HepG2 (cell line): ENCODE measurements at regions of chr6 and their contacts with region 1.

Region 1: GRCh38 chr6:119484637-119484997 is 135.1 kb upstream of the MAN1A1 start:
- DNase-seq: no peak
- ATAC-seq: no peak
- H3K4me3 ChIP-seq: no peak overlapping the region
- H3K27ac ChIP-seq: no peak overlapping the region
- H3K4me1 ChIP-seq: no peaks in the 10 kb centered on the region
- H3K27me3 ChIP-seq: peaks cover 0 to 19% of the 10 kb centered on the region in 2 experiments; a peak in 2 of 5 replicates
- CTCF ChIP-seq: no peak
- EP300 ChIP-seq: no peak
- POLR2A ChIP-seq: no peak
- RAD21 ChIP-seq: no peak

Region 2: DNA sequence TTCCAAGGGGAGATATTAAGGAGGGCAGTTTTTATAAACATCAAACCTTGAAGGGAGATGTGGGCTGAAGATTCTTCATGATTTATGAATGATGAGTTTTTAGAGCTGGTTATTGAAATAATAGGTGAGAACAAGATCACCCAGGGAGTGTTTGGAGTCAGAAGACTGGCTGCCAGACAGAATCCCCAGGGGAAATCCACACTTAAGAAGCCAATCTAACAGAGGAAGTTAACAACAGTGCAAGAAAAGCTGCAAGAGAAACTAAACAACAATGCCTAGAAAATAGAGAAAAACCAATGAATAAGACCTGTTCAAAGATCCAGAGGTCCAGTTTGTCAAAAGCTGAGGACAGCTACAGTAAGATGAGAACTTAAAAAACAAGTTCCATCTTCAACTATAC is 32.8 kb after region 1 on chr6:
- CTCF ChIA-PET with region 1: no interaction called
- POLR2A ChIA-PET with region 1: no interaction called
- in situ Hi-C with region 1: no loop called
- intact Hi-C with region 1: loop called (anchors 1 kb)
- DNase-seq: no peak
- ATAC-seq: no peak
- H3K4me3 ChIP-seq: no peak overlapping the region
- H3K27ac ChIP-seq: no peak overlapping the region
- H3K4me1 ChIP-seq: no peaks in the 10 kb centered on the region
- H3K27me3 ChIP-seq: no peaks in the 10 kb centered on the region; a peak in 2 of 5 replicates
- CTCF ChIP-seq: no peak
- EP300 ChIP-seq: no peak
- POLR2A ChIP-seq: no peak
- RAD21 ChIP-seq: no peak

Region 3: GRCh38 chr6:119686644-119687043 is 202.0 kb after region 1 on chr6:
- CTCF ChIA-PET with region 1: no interaction called
- POLR2A ChIA-PET with region 1: no interaction called
- in situ Hi-C with region 1: no loop called
- intact Hi-C with region 1: no loop called
- DNase-seq: no peak
- ATAC-seq: no peak
- H3K4me3 ChIP-seq: no peak overlapping the region
- H3K27ac ChIP-seq: no peak overlapping the region
- H3K4me1 ChIP-seq: no peaks in the 10 kb centered on the region
- H3K27me3 ChIP-seq: no peaks in the 10 kb centered on the region
- CTCF ChIP-seq: no peak
- EP300 ChIP-seq: no peak
- POLR2A ChIP-seq: no peak
- RAD21 ChIP-seq: no peak